Posterior vena cava (tissue), 2 donors: ENCODE measurements at regions of chr1 and their contacts with region 1.

Region 1: GRCh38 chr1:190367200-190367599 is 110.5 kb downstream of the BRINP3 start:
- DNase-seq: no peak

Region 2: DNA sequence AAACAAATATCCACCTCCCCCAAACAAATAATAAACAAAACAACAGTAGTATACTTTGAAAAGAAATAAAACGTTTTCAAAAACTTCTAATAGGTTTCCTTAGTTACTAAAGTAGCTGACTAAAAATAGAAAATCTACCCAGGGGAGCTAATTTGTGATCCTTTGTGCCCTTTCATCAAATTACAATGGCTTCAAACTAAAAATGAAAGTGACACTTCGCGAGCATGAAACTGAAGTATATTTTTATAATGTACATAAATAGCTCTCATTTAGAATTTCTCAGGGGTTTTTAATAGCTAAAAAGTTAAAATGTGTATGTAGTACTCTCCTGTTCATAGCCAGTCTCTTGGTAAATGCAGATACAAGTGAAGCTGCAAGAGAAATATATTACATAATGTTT is 32.0 kb after region 1 on chr1:
- intact Hi-C with region 1: no loop called
- DNase-seq: no peak

Region 3: DNA sequence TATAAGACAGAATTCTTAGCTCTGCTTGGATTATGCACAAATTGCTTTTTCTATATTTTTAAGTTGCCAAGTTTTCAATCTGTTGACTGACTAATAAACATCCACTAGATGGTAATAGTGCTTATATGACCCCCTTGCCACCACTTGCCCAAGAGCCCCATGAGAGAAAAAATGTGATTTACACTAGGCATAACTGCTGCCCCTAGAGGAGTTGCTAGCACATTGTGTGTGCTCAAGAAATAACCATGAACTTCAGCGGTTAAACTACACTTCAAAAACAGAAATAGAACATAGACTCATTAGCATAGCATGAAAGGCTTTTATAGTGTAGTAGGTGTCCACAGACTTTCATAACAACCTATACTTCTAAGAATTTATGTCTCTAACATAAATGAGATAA is 49.0 kb after region 1 on chr1:
- intact Hi-C with region 1: no loop called
- DNase-seq: no peak

Region 4: GRCh38 chr1:190688096-190688495 is 320.9 kb after region 1 on chr1:
- intact Hi-C with region 1: loop called in 1 of 2 experiments (anchors 5 kb)
- DNase-seq: no peak

Region 5: GRCh38 chr1:191993549-191993948 is 1626.3 kb after region 1 on chr1:
- intact Hi-C with region 1: no loop called
- DNase-seq: no peak